MCF 10A (cell line): ENCODE measurements at regions of chr22 and their contacts with region 1.

Region 1: DNA sequence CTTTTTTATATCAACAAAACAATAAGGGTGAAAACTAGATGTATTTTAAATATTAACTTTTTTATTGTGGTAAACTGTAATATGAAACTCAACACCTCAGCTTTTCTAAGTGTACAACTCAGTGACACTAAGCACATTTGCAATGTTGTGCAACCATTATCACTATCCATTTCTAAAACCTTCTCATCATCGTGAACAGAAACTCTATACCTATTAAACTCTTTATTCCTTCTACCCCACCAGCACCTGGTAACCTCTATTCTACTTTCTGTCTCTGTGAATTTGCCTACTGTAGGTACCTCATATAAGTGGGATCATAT is 9.4 kb downstream of the HORMAD2 start:
- DNase-seq: no peak
- H3K4me3 Mint-ChIP-seq: no peak overlapping the region
- H3K27ac Mint-ChIP-seq: no peak overlapping the region
- H3K4me1 Mint-ChIP-seq: peaks cover 20% of the 10 kb centered on the region
- H3K27me3 Mint-ChIP-seq: no peaks in the 10 kb centered on the region
- CTCF ChIP-seq: no peak

Region 2: DNA sequence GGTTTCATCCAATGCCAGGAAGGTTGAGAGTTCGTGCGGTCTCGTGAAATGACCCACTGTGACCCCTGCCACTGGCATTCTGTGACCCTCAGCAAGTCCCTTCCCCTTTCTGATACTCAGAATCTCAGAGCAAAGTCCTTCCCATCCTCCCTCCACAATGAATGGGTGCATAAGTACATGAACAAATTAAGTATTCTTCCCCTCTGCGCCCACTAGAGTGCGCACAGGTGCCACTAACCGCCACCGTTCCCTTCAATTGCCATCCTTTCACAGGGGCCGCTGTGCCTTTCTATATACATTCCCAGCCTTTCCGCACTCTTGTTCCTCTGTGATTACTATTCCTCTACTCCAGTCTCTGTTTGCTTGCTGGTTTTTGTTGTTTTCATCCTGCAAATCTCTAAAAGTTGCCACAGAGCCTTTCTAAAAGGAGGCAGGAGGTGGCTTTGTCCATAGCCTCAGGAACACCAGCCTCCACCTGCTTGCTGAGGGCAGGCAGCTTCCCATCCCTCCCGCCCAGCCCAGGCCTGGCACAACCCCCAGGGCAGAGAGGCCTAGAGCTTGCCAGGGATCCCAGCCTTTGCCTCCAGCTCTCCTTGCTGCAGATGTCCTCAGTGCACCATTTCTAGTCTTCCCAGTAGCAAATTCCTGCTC is 694.6 kb before region 1 on chr22:
- CTCF ChIA-PET with region 1: interaction called, 3 read pairs
- POLR2A ChIA-PET with region 1: no interaction called
- intact Hi-C with region 1: loop called (anchors 1 kb)
- DNase-seq: peak; percentile 75
- H3K4me3 Mint-ChIP-seq: no peak overlapping the region
- H3K27ac Mint-ChIP-seq: no peak overlapping the region
- H3K4me1 Mint-ChIP-seq: peaks cover 13% of the 10 kb centered on the region
- H3K27me3 Mint-ChIP-seq: peaks cover 2% of the 10 kb centered on the region
- CTCF ChIP-seq: peak; percentile 71

Region 3: DNA sequence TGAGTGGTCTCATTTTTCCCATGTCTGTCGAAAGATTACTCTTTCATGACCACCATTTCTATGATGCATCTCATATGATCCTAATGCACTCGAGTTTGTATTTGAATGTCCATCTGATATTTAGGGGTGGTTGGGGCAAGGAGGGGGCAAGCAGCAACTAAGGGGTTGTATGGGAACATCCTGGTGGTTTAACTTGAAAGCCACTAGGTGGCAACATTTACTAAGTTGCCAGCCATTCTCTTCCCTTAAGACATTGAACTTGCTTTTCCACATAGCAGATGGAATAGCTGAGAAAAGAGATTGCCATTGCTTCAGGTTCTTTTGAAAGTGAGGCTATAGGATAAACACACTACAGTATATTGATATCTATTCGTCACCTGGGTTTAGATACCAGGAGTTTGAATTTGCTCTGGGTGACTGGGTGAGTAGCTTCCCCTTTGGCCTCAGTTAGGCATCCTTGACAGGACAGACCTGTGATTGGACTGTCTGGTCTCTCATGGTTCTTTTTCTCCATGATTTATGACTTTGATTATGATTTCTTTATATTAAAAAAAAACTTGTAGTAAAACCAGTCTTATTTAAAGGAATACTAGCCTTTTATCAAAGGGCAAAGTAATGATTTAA is 453.8 kb before region 1 on chr22:
- CTCF ChIA-PET with region 1: interaction called, 10 read pairs
- POLR2A ChIA-PET with region 1: interaction called, 4 read pairs
- intact Hi-C with region 1: loop called (anchors 1 kb)
- DNase-seq: peak; percentile 56
- H3K4me3 Mint-ChIP-seq: no peak overlapping the region
- H3K27ac Mint-ChIP-seq: no peak overlapping the region
- H3K4me1 Mint-ChIP-seq: peaks cover 12% of the 10 kb centered on the region
- H3K27me3 Mint-ChIP-seq: no peaks in the 10 kb centered on the region
- CTCF ChIP-seq: peak; percentile 57

Region 4: DNA sequence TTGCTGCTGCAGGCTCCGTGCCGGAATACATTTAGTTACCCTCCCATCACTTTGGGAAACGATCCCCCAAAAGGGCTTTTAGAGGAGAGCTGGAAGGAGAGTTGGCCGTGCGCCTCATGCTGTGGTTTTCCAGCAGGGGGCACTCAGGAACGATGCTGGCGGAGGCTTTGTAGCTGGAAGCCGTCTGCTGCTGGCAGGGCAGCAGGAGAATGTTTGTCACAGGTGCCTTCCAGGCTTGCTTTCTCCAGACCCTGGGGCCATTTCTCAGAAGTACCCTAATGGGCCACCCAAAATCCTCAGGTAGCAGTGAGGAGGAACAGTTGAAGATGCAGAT is 399.8 kb before region 1 on chr22:
- CTCF ChIA-PET with region 1: interaction called, 10 read pairs
- POLR2A ChIA-PET with region 1: no interaction called
- intact Hi-C with region 1: loop called (anchors 1 kb)
- DNase-seq: peak; percentile 50
- H3K4me3 Mint-ChIP-seq: no peak overlapping the region
- H3K27ac Mint-ChIP-seq: no peak overlapping the region
- H3K4me1 Mint-ChIP-seq: no peaks in the 10 kb centered on the region
- H3K27me3 Mint-ChIP-seq: no peaks in the 10 kb centered on the region
- CTCF ChIP-seq: peak; percentile 62

Region 5: DNA sequence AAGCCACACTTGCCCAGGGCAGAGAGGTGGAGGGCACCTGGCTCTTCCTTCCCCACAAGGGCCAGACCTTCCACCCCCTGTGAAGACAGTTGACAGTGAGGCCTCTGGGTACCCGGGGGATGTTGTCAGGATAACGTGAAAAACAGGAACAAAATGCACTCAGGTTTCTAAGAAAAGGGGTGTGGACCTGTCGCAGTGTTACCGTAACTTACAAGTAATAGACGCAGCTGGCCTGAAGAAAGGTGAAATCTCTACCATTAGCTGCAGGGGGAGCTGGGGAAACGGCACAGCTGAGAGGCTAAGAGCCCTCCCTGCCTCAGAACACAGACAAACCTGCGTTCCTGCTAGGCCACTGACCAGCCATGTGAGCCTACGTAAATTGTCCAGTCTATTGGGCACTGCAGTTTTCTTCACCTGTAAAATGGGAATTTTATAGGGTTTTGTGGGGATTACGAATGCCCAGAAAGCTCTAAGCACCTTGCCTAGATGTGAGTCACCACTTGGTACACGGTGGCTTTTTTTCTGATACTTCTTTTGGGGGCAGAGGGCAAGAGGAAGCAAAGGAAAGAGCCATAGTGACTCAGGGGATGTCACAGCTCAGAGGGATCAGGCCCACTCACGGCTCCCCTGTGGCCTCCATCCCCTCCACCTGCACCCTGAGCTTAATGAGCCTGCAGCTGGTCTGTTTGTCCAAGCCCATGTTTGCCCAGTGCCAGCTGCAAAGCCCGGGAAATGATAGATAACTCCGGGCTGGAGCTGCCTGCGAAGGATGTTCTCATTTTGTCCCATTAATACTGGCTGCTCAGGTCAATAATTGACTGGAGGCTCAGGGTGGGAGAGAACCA is 388.2 kb before region 1 on chr22:
- CTCF ChIA-PET with region 1: no interaction called
- POLR2A ChIA-PET with region 1: no interaction called
- intact Hi-C with region 1: loop called (anchors 5 kb)
- DNase-seq: peak; percentile 25
- H3K4me3 Mint-ChIP-seq: no peak overlapping the region
- H3K27ac Mint-ChIP-seq: no peak overlapping the region
- H3K4me1 Mint-ChIP-seq: no peaks in the 10 kb centered on the region
- H3K27me3 Mint-ChIP-seq: no peaks in the 10 kb centered on the region
- CTCF ChIP-seq: peak; percentile 25

Region 6: DNA sequence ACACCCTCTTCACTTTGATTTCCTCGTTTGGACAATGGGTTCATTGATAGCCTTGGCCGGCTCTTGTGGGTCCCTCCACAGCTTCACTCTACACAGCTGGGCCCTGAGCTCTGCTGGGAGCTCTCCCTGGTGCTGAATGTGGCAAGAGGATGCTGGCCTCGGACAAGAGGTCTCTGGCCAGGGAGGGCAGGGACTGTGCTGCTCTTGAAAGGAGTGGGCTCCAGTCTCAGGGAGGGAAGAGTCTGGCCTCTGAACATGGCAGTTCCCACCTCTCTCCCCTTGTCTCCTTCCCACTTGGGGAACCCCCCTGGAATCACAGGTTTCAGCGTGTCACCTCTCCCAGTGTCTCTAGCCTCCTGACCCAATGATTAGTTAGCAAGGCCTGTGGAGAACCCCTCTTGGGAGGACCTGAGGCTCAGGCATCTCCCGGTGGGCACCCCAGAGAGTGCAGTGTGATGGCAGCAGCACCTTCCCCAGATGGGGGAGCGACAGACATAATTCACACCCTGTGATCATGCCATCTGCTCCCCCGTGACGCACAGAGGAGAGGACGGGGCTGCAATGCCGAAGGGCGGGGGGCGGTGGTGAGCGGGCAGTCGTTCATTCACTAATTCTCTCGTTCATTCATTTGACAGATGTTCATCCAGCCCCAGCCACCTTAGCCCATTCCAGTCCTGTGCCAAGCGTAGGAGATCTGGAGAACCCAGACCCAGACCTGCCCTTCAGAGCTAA is 372.6 kb before region 1 on chr22:
- CTCF ChIA-PET with region 1: interaction called, 4 read pairs
- POLR2A ChIA-PET with region 1: no interaction called
- intact Hi-C with region 1: loop called (anchors 5 kb)
- DNase-seq: peak; percentile 71
- H3K4me3 Mint-ChIP-seq: no peak overlapping the region
- H3K27ac Mint-ChIP-seq: no peak overlapping the region
- H3K4me1 Mint-ChIP-seq: no peaks in the 10 kb centered on the region
- H3K27me3 Mint-ChIP-seq: peaks cover 11% of the 10 kb centered on the region
- CTCF ChIP-seq: no peak

Region 7: GRCh38 chr22:29772170-29772641 is 317.4 kb before region 1 on chr22:
- CTCF ChIA-PET with region 1: interaction called, 6 read pairs
- POLR2A ChIA-PET with region 1: interaction called, 3 read pairs
- intact Hi-C with region 1: loop called (anchors 1 kb)
- DNase-seq: peak; percentile 55
- H3K4me3 Mint-ChIP-seq: no peak overlapping the region
- H3K27ac Mint-ChIP-seq: peak overlapping the region; percentile 68
- H3K4me1 Mint-ChIP-seq: peaks cover 13% of the 10 kb centered on the region
- H3K27me3 Mint-ChIP-seq: no peaks in the 10 kb centered on the region
- CTCF ChIP-seq: peak; percentile 34

Region 8: GRCh38 chr22:30127749-30128166 is 38.1 kb after region 1 on chr22:
- CTCF ChIA-PET with region 1: no interaction called
- POLR2A ChIA-PET with region 1: no interaction called
- intact Hi-C with region 1: no loop called
- DNase-seq: peak; percentile 6
- H3K4me3 Mint-ChIP-seq: no peak overlapping the region
- H3K27ac Mint-ChIP-seq: no peak overlapping the region
- H3K4me1 Mint-ChIP-seq: peaks cover 4% of the 10 kb centered on the region
- H3K27me3 Mint-ChIP-seq: no peaks in the 10 kb centered on the region
- CTCF ChIP-seq: no peak